ENCODE measurements at regions of chr3 and their contacts with region 1.

Region 1: GRCh38 chr3:112814266-112814665 is 32.4 kb downstream of the CD200R1L start:
- DNase-seq: peak; percentile 28
- H3K4me3 ChIP-seq: peak overlapping the region; percentile 17
- H3K27ac ChIP-seq: peak overlapping the region; percentile 45
- H3K4me1 ChIP-seq: peaks cover 21% of the 10 kb centered on the region
- CTCF ChIP-seq: peak; percentile 71

Region 2: GRCh38 chr3:112734718-112735350 is 79.4 kb before region 1 on chr3:
- CTCF ChIA-PET with region 1: interaction called, 4 read pairs
- POLR2A ChIA-PET with region 1: interaction called, 4 read pairs
- intact Hi-C with region 1: loop called (anchors 1 kb)
- DNase-seq: peak; percentile 73
- H3K4me3 ChIP-seq: no peak overlapping the region
- H3K27ac ChIP-seq: no peak overlapping the region
- H3K4me1 ChIP-seq: no peaks in the 10 kb centered on the region
- CTCF ChIP-seq: peak; percentile 92

Region 3: GRCh38 chr3:114336122-114336697 is 1521.9 kb after region 1 on chr3:
- CTCF ChIA-PET with region 1: no interaction called
- POLR2A ChIA-PET with region 1: no interaction called
- intact Hi-C with region 1: no loop called
- DNase-seq: peak; percentile 9
- H3K4me3 ChIP-seq: no peak overlapping the region
- H3K27ac ChIP-seq: no peak overlapping the region
- H3K4me1 ChIP-seq: peaks cover 10% of the 10 kb centered on the region
- CTCF ChIP-seq: peak; percentile 81

Measured in OCI-LY7 (cell line).